Activated T-helper 1 cell treated with anti-CD3 and anti-CD28 coated beads, Interleukin-12 subunit alpha, Interleukin-12 subunit beta, Interleukin-2, Interleukin-4 antibody, amounts not matched to agents 30 ng/mL and 10 ng/mL and 1 ng/mL, durations not matched to agents 14 hours and 24 hours and 36 hours (primary cell): ENCODE measurements at regions of chr3 and their contacts with region 1.

Region 1: GRCh38 chr3:16884084-16884747 is 539 bp upstream of the PLCL2 start:
- DNase-seq: peak; percentile 45
- H3K4me3 Mint-ChIP-seq: peak overlapping the region; percentile 94
- H3K27ac Mint-ChIP-seq: peak overlapping the region; percentile 96
- H3K4me1 Mint-ChIP-seq: peaks cover 38% of the 10 kb centered on the region
- H3K27me3 Mint-ChIP-seq: peaks cover 4% of the 10 kb centered on the region

Region 2: DNA sequence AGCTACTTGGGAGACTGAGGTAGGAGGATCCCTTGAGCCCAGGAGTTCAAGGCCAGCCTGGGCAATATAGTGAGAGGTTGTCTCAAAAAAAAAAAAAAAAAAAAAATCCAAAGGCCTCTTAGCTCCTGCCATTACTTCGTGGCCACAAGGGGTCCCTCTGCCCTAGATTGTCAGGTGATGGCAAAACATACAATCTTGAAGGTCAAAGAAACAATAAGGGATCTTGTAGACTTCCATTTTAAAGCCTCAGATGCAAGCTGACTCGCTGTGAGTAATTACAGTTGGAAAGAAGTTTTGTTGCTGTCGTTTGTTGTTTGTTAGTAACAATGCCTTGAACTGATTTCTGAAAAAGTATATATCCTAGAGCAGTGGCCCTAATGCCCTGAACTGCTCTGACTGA is 55.4 kb before region 1 on chr3:
- intact Hi-C with region 1: loop called (anchors 1 kb)
- DNase-seq: peak; percentile 22
- H3K4me3 Mint-ChIP-seq: no peak overlapping the region
- H3K27ac Mint-ChIP-seq: no peak overlapping the region
- H3K4me1 Mint-ChIP-seq: peaks cover 21% of the 10 kb centered on the region
- H3K27me3 Mint-ChIP-seq: peaks cover 17% of the 10 kb centered on the region

Region 3: GRCh38 chr3:16898595-16899395 is 14.6 kb after region 1 on chr3:
- intact Hi-C with region 1: loop called (anchors 1 kb)
- DNase-seq: no peak
- H3K4me3 Mint-ChIP-seq: peak overlapping the region; percentile 31
- H3K27ac Mint-ChIP-seq: no peak overlapping the region
- H3K4me1 Mint-ChIP-seq: peaks cover 83% of the 10 kb centered on the region
- H3K27me3 Mint-ChIP-seq: no peaks in the 10 kb centered on the region

Region 4: GRCh38 chr3:17023006-17023664 is 138.9 kb after region 1 on chr3:
- intact Hi-C with region 1: loop called (anchors 1 kb)
- DNase-seq: peak; percentile 61
- H3K4me3 Mint-ChIP-seq: peak overlapping the region; percentile 47
- H3K27ac Mint-ChIP-seq: peak overlapping the region; percentile 75
- H3K4me1 Mint-ChIP-seq: peaks cover 58% of the 10 kb centered on the region
- H3K27me3 Mint-ChIP-seq: no peaks in the 10 kb centered on the region

Region 5: GRCh38 chr3:17077606-17078005 is 193.4 kb after region 1 on chr3:
- intact Hi-C with region 1: loop called (anchors 1 kb)
- DNase-seq: no peak
- H3K4me3 Mint-ChIP-seq: no peak overlapping the region
- H3K27ac Mint-ChIP-seq: peak overlapping the region; percentile 73
- H3K4me1 Mint-ChIP-seq: peaks cover 68% of the 10 kb centered on the region
- H3K27me3 Mint-ChIP-seq: no peaks in the 10 kb centered on the region

Region 6: GRCh38 chr3:17233398-17233800 is 349.2 kb after region 1 on chr3:
- intact Hi-C with region 1: loop called (anchors 1 kb)
- DNase-seq: peak; percentile 27
- H3K4me3 Mint-ChIP-seq: no peak overlapping the region
- H3K27ac Mint-ChIP-seq: no peak overlapping the region
- H3K4me1 Mint-ChIP-seq: peaks cover 13% of the 10 kb centered on the region
- H3K27me3 Mint-ChIP-seq: no peaks in the 10 kb centered on the region